HEK293T (cell line): ENCODE measurements at regions of chr7 and their contacts with region 1.

Region 1: DNA sequence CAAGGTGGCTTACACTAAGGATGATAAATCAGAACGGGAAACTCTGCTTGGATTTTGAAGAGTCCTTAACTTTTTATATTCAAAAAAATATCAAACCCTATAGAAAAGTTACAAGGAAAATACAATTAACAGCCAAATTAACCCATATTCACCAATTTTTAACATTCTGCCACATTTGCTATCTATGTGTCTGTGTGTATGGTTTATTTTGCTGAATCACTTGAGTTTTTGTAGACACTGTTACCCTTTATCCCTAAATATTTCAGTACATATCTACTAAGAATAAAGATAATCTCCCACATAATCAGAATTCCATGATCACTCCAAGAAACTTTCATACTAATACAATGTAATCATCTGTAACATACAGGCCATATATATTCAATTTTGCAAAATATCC is 1.2 kb upstream of the SRPK2 start:
- DNase-seq: no peak

Region 2: DNA sequence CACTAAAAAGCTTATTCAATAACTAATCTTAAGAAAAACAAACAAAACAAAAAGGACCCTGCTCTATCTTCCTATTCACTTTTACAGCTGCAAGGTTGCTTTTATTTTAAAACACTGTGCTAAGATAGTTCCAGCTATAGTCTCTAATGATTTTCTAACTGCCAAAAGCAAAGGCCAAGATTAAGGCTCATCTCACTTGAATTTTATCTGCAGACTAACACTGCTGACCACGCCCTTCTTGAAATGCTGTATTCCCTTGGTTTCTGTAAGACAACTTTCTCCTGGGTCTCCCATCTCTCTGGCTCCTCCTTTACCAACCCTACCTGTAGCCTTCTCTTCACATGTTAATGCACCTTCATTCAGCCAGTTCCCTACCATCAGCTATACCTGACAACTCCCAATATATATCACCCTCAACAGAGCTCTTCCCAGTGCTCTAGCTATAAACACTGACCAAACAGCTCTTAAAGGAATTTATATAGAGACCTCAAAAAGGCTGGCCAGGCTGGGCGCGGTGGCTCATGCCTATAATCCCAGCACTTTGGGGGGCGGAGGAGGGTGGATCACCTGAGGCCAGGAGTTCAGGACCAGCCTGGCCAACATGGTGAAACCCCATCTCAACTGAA is 12.9 kb before region 1 on chr7:
- CTCF ChIA-PET with region 1: interaction called, 13 read pairs
- POLR2A ChIA-PET with region 1: no interaction called
- DNase-seq: no peak